ENCODE measurements at regions of chr2 and their contacts with region 1.

Region 1: DNA sequence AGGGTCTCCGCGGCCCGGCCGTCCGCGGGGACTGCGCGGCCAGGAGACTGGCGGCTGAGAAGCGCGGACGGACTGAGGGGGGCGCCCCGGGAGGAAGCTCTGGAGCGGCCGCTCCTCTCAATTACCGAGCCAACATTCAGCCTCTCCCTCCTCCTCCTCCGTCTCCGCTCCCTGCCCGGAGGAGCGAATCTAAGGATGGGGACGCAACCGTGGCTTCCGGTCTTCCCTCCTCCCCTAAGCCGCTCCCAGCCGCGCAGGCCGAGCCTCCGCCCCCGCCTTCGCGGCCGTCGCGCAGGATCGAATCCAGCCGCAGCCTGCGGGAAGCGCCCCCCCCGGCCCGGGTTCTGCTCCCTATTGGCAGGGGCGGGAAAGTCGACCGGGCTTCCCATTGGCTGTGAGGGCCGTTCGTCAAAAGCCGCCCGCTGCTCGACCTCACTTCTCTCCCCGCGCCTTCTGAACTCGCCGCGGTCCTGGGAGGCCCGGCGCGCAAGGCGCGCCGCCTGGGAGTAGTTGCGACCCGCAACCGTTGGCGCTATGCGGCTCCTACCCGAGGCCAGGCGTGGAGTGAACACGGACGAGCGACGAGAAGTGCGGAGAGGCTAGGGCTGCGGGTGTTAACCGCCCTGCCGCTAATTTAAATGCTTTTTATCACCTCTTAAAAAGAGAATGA is at the start of gene HNRNPLL:
- DNase-seq: peak; percentile 97
- ATAC-seq: peak; percentile 88
- H3K4me3 Mint-ChIP-seq: peak within 1 kb of the TSS; percentile 82
- H3K27ac Mint-ChIP-seq: peak within 1 kb of the TSS; percentile 88
- H3K4me1 Mint-ChIP-seq: peaks cover 44% of the 10 kb centered on the region
- H3K27me3 Mint-ChIP-seq: no peaks in the 10 kb centered on the region
- CTCF ChIP-seq: no peak
- total RNA-seq, gene HNRNPLL: 54.9 to 55.3 TPM

Region 2: DNA sequence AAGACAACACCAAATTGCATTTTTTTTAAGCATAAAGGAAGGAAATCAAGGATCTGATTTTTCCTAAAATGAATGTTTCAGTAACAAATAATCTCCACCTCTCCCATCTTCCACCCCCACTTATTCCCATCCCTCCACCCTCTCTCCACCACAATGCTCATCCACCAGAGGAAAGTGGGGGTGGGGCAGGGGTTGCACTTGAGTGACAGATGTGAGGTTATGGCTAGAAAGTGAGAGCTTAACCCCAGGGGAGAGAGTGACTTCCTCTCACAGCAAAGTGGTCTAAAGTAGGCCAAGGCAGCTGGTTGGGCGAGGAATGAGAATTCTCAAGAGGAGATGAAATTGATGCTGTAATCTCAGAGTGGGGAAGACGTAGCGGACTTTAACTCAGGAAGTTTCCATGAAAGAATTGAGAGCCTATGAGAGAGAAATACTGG is 104.8 kb before region 1 on chr2:
- CTCF ChIA-PET with region 1: no interaction called
- POLR2A ChIA-PET with region 1: no interaction called
- intact Hi-C with region 1: no loop called
- DNase-seq: no peak
- ATAC-seq: no peak
- H3K4me3 Mint-ChIP-seq: no peak overlapping the region
- H3K27ac Mint-ChIP-seq: no peak overlapping the region
- H3K4me1 Mint-ChIP-seq: peaks cover 5% of the 10 kb centered on the region
- H3K27me3 Mint-ChIP-seq: peaks cover 3% of the 10 kb centered on the region
- CTCF ChIP-seq: no peak

Region 3: GRCh38 chr2:38619458-38620164 is 16.7 kb after region 1 on chr2:
- CTCF ChIA-PET with region 1: interaction called, 31 read pairs
- POLR2A ChIA-PET with region 1: interaction called, 4 read pairs
- intact Hi-C with region 1: no loop called
- DNase-seq: no peak
- ATAC-seq: no peak
- H3K4me3 Mint-ChIP-seq: no peak overlapping the region
- H3K27ac Mint-ChIP-seq: no peak overlapping the region
- H3K4me1 Mint-ChIP-seq: peaks cover 19% of the 10 kb centered on the region
- H3K27me3 Mint-ChIP-seq: no peaks in the 10 kb centered on the region
- CTCF ChIP-seq: no peak

Region 4: DNA sequence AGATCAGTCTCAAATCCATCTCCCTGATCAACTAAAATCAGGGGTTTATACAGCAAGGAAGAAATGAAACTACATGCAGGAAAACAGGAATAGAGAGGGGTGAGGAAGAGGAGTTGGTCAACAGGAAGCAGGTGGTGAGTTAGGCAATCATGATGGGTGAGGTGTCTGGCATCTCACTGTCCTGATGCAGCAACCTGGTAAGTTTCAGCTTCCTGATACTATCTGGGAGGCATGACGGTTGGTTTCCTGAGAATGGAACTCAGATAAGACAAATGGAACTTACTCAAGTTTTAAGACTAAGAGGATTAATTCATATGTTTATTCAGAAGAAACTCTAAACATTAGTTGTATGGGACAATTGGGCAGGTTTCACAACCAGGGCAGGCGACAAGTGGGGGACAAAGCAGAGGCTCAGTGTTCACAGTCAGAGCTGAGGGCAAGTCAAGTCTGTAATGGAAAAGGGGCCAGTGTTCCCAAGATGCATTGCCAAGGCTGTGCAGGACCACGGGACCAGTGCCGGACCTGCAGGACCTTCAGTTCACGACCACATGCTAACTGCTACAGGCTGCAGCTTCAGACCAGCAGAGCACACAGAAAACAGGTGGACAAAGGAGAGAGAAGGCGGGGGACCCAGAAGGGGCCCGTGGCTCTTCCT is 45.4 kb after region 1 on chr2:
- CTCF ChIA-PET with region 1: interaction called, 20 read pairs
- POLR2A ChIA-PET with region 1: interaction called, 49 read pairs
- intact Hi-C with region 1: loop called (anchors 2 kb)
- DNase-seq: no peak
- ATAC-seq: no peak
- H3K4me3 Mint-ChIP-seq: no peak overlapping the region
- H3K27ac Mint-ChIP-seq: peak overlapping the region; percentile 33
- H3K4me1 Mint-ChIP-seq: peaks cover 38% of the 10 kb centered on the region
- H3K27me3 Mint-ChIP-seq: no peaks in the 10 kb centered on the region
- CTCF ChIP-seq: no peak

Region 5: GRCh38 chr2:38665854-38666555 is 63.1 kb after region 1 on chr2 and contains the start of gene GALM:
- CTCF ChIA-PET with region 1: interaction called, 89 read pairs
- POLR2A ChIA-PET with region 1: interaction called, 111 read pairs
- intact Hi-C with region 1: loop called (anchors 2 kb)
- DNase-seq: peak; percentile 74
- ATAC-seq: peak; percentile 37
- H3K4me3 Mint-ChIP-seq: peak within 1 kb of the TSS; percentile 79
- H3K27ac Mint-ChIP-seq: peak within 1 kb of the TSS; percentile 98
- H3K4me1 Mint-ChIP-seq: peaks cover 59% of the 10 kb centered on the region
- H3K27me3 Mint-ChIP-seq: no peaks in the 10 kb centered on the region
- CTCF ChIP-seq: no peak
- total RNA-seq, gene GALM: 38.3 to 40.6 TPM

Region 6: GRCh38 chr2:38709567-38710194 is 106.8 kb after region 1 on chr2:
- CTCF ChIA-PET with region 1: interaction called, 19 read pairs
- POLR2A ChIA-PET with region 1: interaction called, 3 read pairs
- intact Hi-C with region 1: no loop called
- DNase-seq: peak; percentile 69
- ATAC-seq: peak; percentile 78
- H3K4me3 Mint-ChIP-seq: peak overlapping the region; percentile 32
- H3K27ac Mint-ChIP-seq: peak overlapping the region; percentile 87
- H3K4me1 Mint-ChIP-seq: peaks cover 67% of the 10 kb centered on the region
- H3K27me3 Mint-ChIP-seq: no peaks in the 10 kb centered on the region
- CTCF ChIP-seq: no peak

Region 7: GRCh38 chr2:38740851-38741731 is 138.2 kb after region 1 on chr2:
- CTCF ChIA-PET with region 1: interaction called, 19 read pairs
- POLR2A ChIA-PET with region 1: interaction called, 209 read pairs
- intact Hi-C with region 1: no loop called
- DNase-seq: no peak
- ATAC-seq: no peak
- H3K4me3 Mint-ChIP-seq: no peak overlapping the region
- H3K27ac Mint-ChIP-seq: peak overlapping the region; percentile 28
- H3K4me1 Mint-ChIP-seq: peaks cover 46% of the 10 kb centered on the region
- H3K27me3 Mint-ChIP-seq: no peaks in the 10 kb centered on the region
- CTCF ChIP-seq: peak; percentile 87

Measured in activated CD8-positive, alpha-beta T cell treated with anti-CD3 and anti-CD28 coated beads for 36 hours (primary cell).